Heart right ventricle (tissue), 16 donors: ENCODE measurements at regions of chr3 and their contacts with region 1.

Region 1: DNA sequence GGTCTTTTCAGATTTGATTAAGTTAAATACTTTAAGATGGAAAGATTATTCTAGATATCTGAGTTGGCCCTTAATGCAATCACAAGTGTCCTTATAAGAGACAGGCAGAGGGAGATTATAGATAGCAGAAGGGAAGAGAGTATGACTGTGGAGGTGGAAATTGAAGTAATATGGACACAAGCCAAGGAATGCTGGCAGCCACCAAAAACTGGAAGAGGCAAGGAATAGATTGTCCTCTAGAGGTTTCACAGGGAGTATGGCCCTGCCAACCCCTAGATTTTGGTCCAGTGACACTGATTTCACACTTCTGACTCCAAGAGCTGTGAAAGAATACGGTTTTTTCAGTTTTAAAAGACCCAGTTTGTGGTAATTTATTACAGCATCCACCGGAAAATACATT is 1498.7 kb upstream of the CADM2 start:
- DNase-seq: no peak
- ATAC-seq: no peak
- H3K4me3 ChIP-seq: no peak overlapping the region
- H3K27ac ChIP-seq: no peak overlapping the region
- H3K4me1 ChIP-seq: no peaks in the 10 kb centered on the region
- H3K27me3 ChIP-seq: no peaks in the 10 kb centered on the region
- CTCF ChIP-seq: no peak

Region 2: GRCh38 chr3:83769791-83770646 is 310.0 kb after region 1 on chr3:
- intact Hi-C with region 1: loop called in 1 of 10 experiments (anchors 10 kb)
- DNase-seq: no peak
- ATAC-seq: no peak
- H3K4me3 ChIP-seq: no peak overlapping the region
- H3K27ac ChIP-seq: no peak overlapping the region
- H3K4me1 ChIP-seq: no peaks in the 10 kb centered on the region
- H3K27me3 ChIP-seq: no peaks in the 10 kb centered on the region
- CTCF ChIP-seq: no peak